Esophagus muscularis mucosa (tissue), 4 donors: ENCODE measurements at regions of chr3 and their contacts with region 1.

Region 1: DNA sequence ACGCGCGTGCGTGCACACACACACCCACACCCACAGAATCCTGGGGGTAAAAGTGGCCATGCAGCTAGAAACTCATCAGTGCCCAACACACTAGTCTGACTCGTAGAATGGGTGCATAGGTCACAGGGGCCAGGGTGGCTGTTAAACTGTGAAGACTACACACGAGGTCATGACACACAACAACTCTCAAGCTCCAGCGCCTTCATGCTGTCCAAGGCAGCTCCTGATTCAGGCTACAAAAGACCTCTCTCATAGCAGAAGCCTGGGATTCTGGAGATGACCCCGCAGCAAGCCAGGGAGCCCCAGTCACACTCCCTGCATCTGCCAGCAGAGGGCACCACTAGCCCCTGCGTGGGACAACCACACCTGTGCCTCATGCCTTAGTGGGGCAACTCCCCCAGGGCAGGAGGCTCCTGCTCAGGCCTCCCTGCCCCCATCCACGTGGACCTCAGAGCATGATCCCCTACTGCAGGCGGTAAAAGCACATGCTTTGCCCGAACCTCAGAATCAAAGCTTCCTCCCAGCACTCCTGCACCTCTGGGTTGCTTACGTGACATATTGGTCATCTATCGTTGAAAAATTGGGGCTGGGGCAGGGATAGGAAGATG is 93.1 kb downstream of the LRIG1 start:
- DNase-seq: no peak
- H3K4me3 ChIP-seq: no peak overlapping the region
- H3K27ac ChIP-seq: peak overlapping the region; percentile 73 to 86 (median 82)
- H3K4me1 ChIP-seq: peaks cover 57 to 100% (median 100%) of the 10 kb centered on the region in 4 donors
- H3K27me3 ChIP-seq: no peaks in the 10 kb centered on the region
- CTCF ChIP-seq: peak; percentile 85 to 96 (median 93)
- EP300 ChIP-seq: no peak
- POLR2A ChIP-seq: no peak

Region 2: DNA sequence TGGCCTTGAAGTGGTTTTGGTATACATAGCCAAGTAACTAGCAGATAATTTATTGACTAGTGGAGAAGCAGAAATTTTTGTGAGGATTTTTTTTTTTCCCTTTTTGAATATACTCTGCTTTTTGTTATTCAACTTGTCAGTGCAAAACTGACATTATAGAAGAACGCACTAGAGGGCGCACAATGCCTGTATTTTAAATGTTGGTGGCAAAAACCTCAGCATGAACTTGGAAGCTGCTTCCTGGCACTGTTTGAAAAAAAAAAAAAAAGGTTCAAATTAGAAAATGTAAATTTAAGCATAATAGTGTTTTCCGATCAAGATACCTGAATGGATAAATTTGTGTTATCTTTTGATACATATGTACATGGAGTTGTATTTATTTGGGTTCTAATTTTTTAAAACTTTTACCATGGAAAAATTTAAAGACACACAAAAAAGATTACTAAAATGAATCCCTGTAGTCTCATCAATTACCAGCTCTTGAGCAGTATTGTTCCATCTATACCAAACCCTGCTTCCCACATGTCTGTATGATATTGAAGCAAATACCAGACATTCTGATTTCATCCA is 130.9 kb before region 1 on chr3:
- intact Hi-C with region 1: loop called (anchors 10 kb)
- DNase-seq: no peak
- H3K4me3 ChIP-seq: no peak overlapping the region
- H3K27ac ChIP-seq: no peak overlapping the region
- H3K4me1 ChIP-seq: no peaks in the 10 kb centered on the region
- H3K27me3 ChIP-seq: no peaks in the 10 kb centered on the region
- CTCF ChIP-seq: peak; percentile 66 to 73 (median 71)
- EP300 ChIP-seq: no peak
- POLR2A ChIP-seq: no peak

Region 3: GRCh38 chr3:66500576-66501482 is 93.1 kb after region 1 on chr3 and contains the start of gene LRIG1:
- intact Hi-C with region 1: loop called (anchors 2 kb)
- DNase-seq: peak; percentile 100
- H3K4me3 ChIP-seq: peak within 1 kb of the TSS; percentile 89 to 100 (median 91)
- H3K27ac ChIP-seq: peak within 1 kb of the TSS; percentile 96 to 99 (median 97)
- H3K4me1 ChIP-seq: peaks cover 28 to 55% (median 50%) of the 10 kb centered on the region in 4 donors
- H3K27me3 ChIP-seq: no peaks in the 10 kb centered on the region
- CTCF ChIP-seq: peak; percentile 3 to 56 (median 5)
- EP300 ChIP-seq: no peak
- POLR2A ChIP-seq: peak; percentile 73
- total RNA-seq, gene LRIG1: 95.3 to 136 (median 131) TPM

Region 4: GRCh38 chr3:66722675-66723074 is 315.0 kb after region 1 on chr3:
- intact Hi-C with region 1: loop called (anchors 10 kb)
- DNase-seq: no peak
- H3K4me3 ChIP-seq: no peak overlapping the region
- H3K27ac ChIP-seq: peak overlapping the region; percentile 35 to 64 (median 47)
- H3K4me1 ChIP-seq: peaks cover 0 to 44% (median 25%) of the 10 kb centered on the region in 4 donors
- H3K27me3 ChIP-seq: no peaks in the 10 kb centered on the region
- CTCF ChIP-seq: no peak
- EP300 ChIP-seq: no peak
- POLR2A ChIP-seq: no peak

Region 5: GRCh38 chr3:66816090-66816761 is 408.5 kb after region 1 on chr3:
- intact Hi-C with region 1: loop called (anchors 2 kb)
- DNase-seq: no peak
- H3K4me3 ChIP-seq: no peak overlapping the region
- H3K27ac ChIP-seq: no peak overlapping the region
- H3K4me1 ChIP-seq: peaks cover 0 to 20% (median 14%) of the 10 kb centered on the region in 4 donors
- H3K27me3 ChIP-seq: no peaks in the 10 kb centered on the region
- CTCF ChIP-seq: peak; percentile 64 to 69 (median 65)
- EP300 ChIP-seq: no peak
- POLR2A ChIP-seq: no peak